MCF 10A (cell line): ENCODE measurements at regions of chr6 and their contacts with region 1.

Region 1: GRCh38 chr6:158213925-158214674 is 46.0 kb downstream of the GTF2H5 start:
- DNase-seq: peak; percentile 80
- H3K4me3 Mint-ChIP-seq: no peak overlapping the region
- H3K27ac Mint-ChIP-seq: no peak overlapping the region
- H3K4me1 Mint-ChIP-seq: peaks cover 10% of the 10 kb centered on the region
- H3K27me3 Mint-ChIP-seq: no peaks in the 10 kb centered on the region
- CTCF ChIP-seq: peak; percentile 75

Region 2: GRCh38 chr6:157008568-157008967 is 1205.5 kb before region 1 on chr6:
- CTCF ChIA-PET with region 1: no interaction called
- POLR2A ChIA-PET with region 1: no interaction called
- intact Hi-C with region 1: no loop called
- DNase-seq: no peak
- H3K4me3 Mint-ChIP-seq: no peak overlapping the region
- H3K27ac Mint-ChIP-seq: no peak overlapping the region
- H3K4me1 Mint-ChIP-seq: peaks cover 5% of the 10 kb centered on the region
- H3K27me3 Mint-ChIP-seq: no peaks in the 10 kb centered on the region
- CTCF ChIP-seq: no peak

Region 3: GRCh38 chr6:158518191-158519127 is 304.4 kb after region 1 on chr6:
- CTCF ChIA-PET with region 1: interaction called, 11 read pairs
- POLR2A ChIA-PET with region 1: no interaction called
- intact Hi-C with region 1: no loop called
- DNase-seq: peak; percentile 89
- H3K4me3 Mint-ChIP-seq: peak overlapping the region; percentile 73
- H3K27ac Mint-ChIP-seq: peak overlapping the region; percentile 82
- H3K4me1 Mint-ChIP-seq: no peaks in the 10 kb centered on the region
- H3K27me3 Mint-ChIP-seq: no peaks in the 10 kb centered on the region
- CTCF ChIP-seq: peak; percentile 60

Region 4: DNA sequence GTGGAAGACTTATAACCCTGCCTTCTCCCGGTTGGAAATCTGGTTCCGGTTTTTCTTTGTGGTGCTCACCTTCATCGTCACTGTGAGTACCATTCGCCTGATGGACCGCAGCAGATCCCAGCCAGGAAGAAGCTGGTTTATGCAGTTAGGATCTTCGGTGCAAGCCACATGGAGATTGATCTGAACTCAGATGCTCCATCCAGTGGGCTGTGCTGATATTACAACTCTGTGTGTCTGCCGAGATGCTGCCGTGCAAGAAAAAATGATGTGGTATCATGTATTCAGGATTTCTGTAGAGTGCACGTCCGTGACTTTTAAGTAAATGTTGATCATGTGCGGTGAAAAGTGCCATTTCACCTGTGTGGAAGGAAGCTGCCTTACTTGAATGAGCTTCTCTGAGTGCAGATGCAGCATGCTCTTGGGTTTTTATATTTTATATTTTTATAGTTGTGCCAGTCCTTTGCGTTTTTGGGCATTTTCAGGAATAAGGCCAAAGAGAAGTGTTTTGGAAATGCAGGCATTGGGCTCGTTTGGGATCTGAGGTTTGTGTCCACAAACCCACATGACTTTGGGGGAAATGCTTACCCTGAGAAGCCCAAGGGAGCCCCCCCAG is 391.3 kb after region 1 on chr6:
- CTCF ChIA-PET with region 1: interaction called, 58 read pairs
- POLR2A ChIA-PET with region 1: interaction called, 7 read pairs
- intact Hi-C with region 1: loop called (anchors 1 kb)
- DNase-seq: peak; percentile 65
- H3K4me3 Mint-ChIP-seq: no peak overlapping the region
- H3K27ac Mint-ChIP-seq: no peak overlapping the region
- H3K4me1 Mint-ChIP-seq: no peaks in the 10 kb centered on the region
- H3K27me3 Mint-ChIP-seq: no peaks in the 10 kb centered on the region
- CTCF ChIP-seq: peak; percentile 72

Region 5: DNA sequence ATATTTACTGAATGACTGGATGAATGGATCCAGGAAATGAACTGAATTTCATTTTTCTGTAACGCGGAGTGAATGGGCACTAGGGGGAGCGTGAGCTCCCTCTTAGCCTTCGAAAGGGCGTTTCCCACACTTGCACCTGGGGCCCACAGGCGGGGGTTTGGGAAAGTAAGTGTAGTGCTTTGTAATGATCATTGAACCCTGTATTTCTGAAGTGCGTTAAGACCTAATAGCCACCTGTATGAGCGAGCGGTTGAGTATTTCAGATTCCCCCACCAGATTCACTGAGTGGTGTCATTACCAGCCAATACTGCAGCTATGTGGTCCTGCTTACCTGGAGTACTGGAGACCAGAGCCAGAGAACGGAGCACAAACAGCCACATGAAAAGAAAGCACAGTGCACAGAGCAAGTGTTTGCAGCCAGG is 446.2 kb after region 1 on chr6:
- CTCF ChIA-PET with region 1: interaction called, 13 read pairs
- POLR2A ChIA-PET with region 1: no interaction called
- intact Hi-C with region 1: no loop called
- DNase-seq: peak; percentile 47
- H3K4me3 Mint-ChIP-seq: no peak overlapping the region
- H3K27ac Mint-ChIP-seq: no peak overlapping the region
- H3K4me1 Mint-ChIP-seq: peaks cover 2% of the 10 kb centered on the region
- H3K27me3 Mint-ChIP-seq: no peaks in the 10 kb centered on the region
- CTCF ChIP-seq: peak; percentile 35